H1 (cell line): ENCODE measurements at regions of chr4 and their contacts with region 1.

Region 1: GRCh38 chr4:54091637-54092404 is 8.1 kb upstream of the GSX2 start:
- DNase-seq: peak in 1 of 2 experiments; percentile 52
- H3K4me3 ChIP-seq: peak overlapping the region; percentile 37 to 60 (median 49); a peak in 7 of 8 replicates
- H3K27ac ChIP-seq: no peak overlapping the region
- H3K4me1 ChIP-seq: peaks cover 20 to 38% (median 23%) of the 10 kb centered on the region in 4 experiments
- H3K27me3 ChIP-seq: peaks cover 46 to 70% (median 66%) of the 10 kb centered on the region in 4 experiments
- CTCF ChIP-seq: no peak
- EP300 ChIP-seq: no peak
- POLR2A ChIP-seq: no peak
- RAD21 ChIP-seq: no peak

Region 2: GRCh38 chr4:53962516-53963225 is 129.2 kb before region 1 on chr4:
- CTCF ChIA-PET with region 1: no interaction called
- POLR2A ChIA-PET with region 1: no interaction called
- DNase-seq: no peak
- H3K4me3 ChIP-seq: no peak overlapping the region
- H3K27ac ChIP-seq: no peak overlapping the region
- H3K4me1 ChIP-seq: peaks cover 0 to 4% (median 0%) of the 10 kb centered on the region in 4 experiments; a peak in 3 of 7 replicates
- H3K27me3 ChIP-seq: no peaks in the 10 kb centered on the region
- CTCF ChIP-seq: no peak
- EP300 ChIP-seq: no peak
- POLR2A ChIP-seq: no peak
- RAD21 ChIP-seq: no peak

Region 3: DNA sequence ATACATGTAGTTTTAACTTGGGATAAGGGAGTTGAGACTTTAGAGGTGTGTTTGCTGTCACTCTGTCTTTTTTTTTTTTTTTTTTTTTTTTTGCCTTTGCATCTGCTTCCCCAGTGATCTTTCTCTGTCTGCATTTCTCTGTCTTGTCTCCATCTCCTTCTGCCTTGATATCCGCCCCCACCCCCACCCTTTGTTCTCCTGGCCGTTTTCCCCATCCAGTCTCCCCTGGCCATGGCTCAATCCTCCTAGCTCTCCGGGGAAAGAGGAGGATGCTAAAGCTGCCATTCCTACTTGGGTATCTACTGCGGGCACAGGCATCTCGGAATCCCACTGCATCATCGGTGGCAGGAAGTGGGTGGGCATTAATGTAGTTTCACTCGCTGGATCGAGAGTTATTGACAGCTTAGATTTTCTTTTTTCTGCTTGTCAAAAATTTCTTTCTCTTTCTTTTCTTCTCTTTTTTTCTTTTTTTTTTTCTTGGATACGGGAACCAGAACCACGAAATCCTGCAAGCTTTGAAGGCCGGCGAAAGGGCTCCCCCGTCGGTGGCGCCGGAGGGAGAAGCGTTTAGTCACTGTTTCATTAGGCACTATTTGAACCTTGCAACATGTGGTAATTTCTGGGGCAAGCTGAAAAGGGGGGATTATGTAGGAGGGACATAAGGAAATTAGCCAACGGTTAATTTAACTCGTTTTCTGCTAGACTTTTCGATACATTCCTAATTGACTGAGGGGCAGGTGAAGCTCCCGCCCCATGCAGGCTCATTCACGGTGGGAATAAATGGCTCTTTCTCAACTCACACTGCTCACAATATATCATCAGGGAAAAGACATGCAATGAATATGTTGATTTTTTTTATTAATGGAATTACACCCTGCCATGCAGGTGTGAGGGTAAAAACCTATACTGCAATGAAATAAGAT is 16.4 kb after region 1 on chr4:
- CTCF ChIA-PET with region 1: interaction called, 62 read pairs
- POLR2A ChIA-PET with region 1: interaction called, 16 read pairs
- DNase-seq: no peak
- H3K4me3 ChIP-seq: peak overlapping the region; percentile 1 to 54 (median 39); a peak in 7 of 8 replicates
- H3K27ac ChIP-seq: no peak overlapping the region
- H3K4me1 ChIP-seq: peaks cover 4 to 29% (median 16%) of the 10 kb centered on the region in 4 experiments
- H3K27me3 ChIP-seq: peaks cover 37 to 77% (median 65%) of the 10 kb centered on the region in 4 experiments
- CTCF ChIP-seq: no peak
- EP300 ChIP-seq: no peak
- POLR2A ChIP-seq: no peak
- RAD21 ChIP-seq: no peak

Region 4: GRCh38 chr4:54165011-54165410 is 73.2 kb after region 1 on chr4:
- CTCF ChIA-PET with region 1: no interaction called
- POLR2A ChIA-PET with region 1: no interaction called
- DNase-seq: no peak
- H3K4me3 ChIP-seq: no peak overlapping the region
- H3K27ac ChIP-seq: no peak overlapping the region
- H3K4me1 ChIP-seq: no peaks in the 10 kb centered on the region
- H3K27me3 ChIP-seq: no peaks in the 10 kb centered on the region
- CTCF ChIP-seq: no peak
- EP300 ChIP-seq: no peak
- POLR2A ChIP-seq: no peak
- RAD21 ChIP-seq: no peak

Region 5: DNA sequence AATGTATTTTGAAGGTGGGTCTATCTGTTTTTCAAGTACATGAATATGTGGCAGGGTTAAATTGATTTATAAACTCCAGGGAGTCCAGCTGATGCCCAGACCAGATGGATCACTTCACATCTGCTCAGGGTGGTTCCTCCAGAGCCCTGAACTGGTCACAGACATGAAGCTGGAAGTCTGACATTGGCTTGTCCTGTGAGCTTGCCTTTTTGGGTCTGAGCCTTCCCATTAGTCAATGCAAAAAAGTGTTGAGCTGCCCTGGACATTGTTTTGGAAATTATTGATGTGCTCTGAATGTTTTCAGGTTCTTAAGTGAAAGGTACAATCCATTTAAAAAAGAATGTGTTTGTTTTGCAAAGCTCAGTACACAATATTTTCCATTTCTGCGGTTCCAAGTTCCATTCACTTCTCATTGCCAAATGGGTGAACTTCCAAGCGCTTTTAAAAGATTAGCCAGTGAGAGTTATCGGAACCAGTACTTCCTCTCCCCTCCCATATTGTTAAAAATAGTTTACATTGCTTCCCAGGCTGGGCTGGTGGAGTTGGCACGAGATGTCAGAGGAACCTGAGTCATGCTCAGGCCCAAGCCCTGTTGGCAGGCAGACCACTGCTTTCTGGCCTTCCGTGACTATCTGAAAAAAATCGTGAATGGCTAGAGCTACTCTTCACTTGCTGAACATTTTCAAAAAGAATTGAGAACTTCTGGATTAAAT is 189.4 kb after region 1 on chr4:
- CTCF ChIA-PET with region 1: no interaction called
- POLR2A ChIA-PET with region 1: no interaction called
- DNase-seq: no peak
- H3K4me3 ChIP-seq: no peak overlapping the region
- H3K27ac ChIP-seq: no peak overlapping the region
- H3K4me1 ChIP-seq: peaks cover 5 to 15% (median 14%) of the 10 kb centered on the region in 4 experiments; a peak in 6 of 7 replicates
- H3K27me3 ChIP-seq: no peaks in the 10 kb centered on the region
- CTCF ChIP-seq: no peak
- EP300 ChIP-seq: no peak
- POLR2A ChIP-seq: no peak
- RAD21 ChIP-seq: no peak

Region 6: DNA sequence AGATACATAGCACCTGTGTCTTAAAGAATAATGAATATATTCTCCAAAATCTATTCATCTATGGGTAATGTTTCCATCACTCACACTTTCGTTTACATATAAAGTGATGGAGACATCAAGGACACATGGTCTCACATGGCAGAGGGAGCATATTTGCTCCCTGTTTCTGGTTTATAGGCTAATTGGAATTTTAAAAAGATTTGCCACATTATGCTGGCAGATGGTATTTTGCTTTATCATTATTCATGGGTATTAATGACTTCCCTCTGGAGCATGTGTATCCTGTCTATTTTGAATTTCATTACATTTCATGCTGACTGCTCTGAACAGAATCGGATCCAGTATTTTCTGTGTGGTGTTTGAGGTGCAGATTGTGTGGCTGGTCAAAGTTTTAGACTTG is 216.3 kb after region 1 on chr4:
- CTCF ChIA-PET with region 1: no interaction called
- POLR2A ChIA-PET with region 1: no interaction called
- DNase-seq: no peak
- H3K4me3 ChIP-seq: no peak overlapping the region
- H3K27ac ChIP-seq: no peak overlapping the region
- H3K4me1 ChIP-seq: no peaks in the 10 kb centered on the region
- H3K27me3 ChIP-seq: no peaks in the 10 kb centered on the region
- CTCF ChIP-seq: no peak
- EP300 ChIP-seq: no peak
- POLR2A ChIP-seq: no peak
- RAD21 ChIP-seq: no peak